Activated T-helper 1 cell treated with anti-CD3 and anti-CD28 coated beads, Interleukin-12 subunit alpha, Interleukin-12 subunit beta, Interleukin-2, Interleukin-4 antibody, amounts not matched to agents 30 ng/mL and 10 ng/mL and 1 ng/mL, durations not matched to agents 14 hours and 24 hours and 36 hours (primary cell): ENCODE measurements at regions of chr3 and their contacts with region 1.

Region 1: GRCh38 chr3:19885468-19885867 is 48.5 kb downstream of the EFHB start:
- DNase-seq: no peak
- H3K4me3 Mint-ChIP-seq: no peak overlapping the region
- H3K27ac Mint-ChIP-seq: no peak overlapping the region
- H3K4me1 Mint-ChIP-seq: peaks cover 11% of the 10 kb centered on the region
- H3K27me3 Mint-ChIP-seq: peaks cover 5% of the 10 kb centered on the region

Region 2: GRCh38 chr3:19946832-19947548 is 61.5 kb after region 1 on chr3 and contains the start of gene RAB5A:
- intact Hi-C with region 1: loop called (anchors 1 kb)
- DNase-seq: peak; percentile 96
- H3K4me3 Mint-ChIP-seq: peak within 1 kb of the TSS; percentile 92
- H3K27ac Mint-ChIP-seq: peak within 1 kb of the TSS; percentile 97
- H3K4me1 Mint-ChIP-seq: peaks cover 47% of the 10 kb centered on the region
- H3K27me3 Mint-ChIP-seq: no peaks in the 10 kb centered on the region
- total RNA-seq, gene RAB5A: 62.2 and 64.0 TPM in 2 replicates

Region 3: GRCh38 chr3:19972051-19972454 is 86.6 kb after region 1 on chr3:
- intact Hi-C with region 1: loop called (anchors 5 kb)
- DNase-seq: no peak
- H3K4me3 Mint-ChIP-seq: no peak overlapping the region
- H3K27ac Mint-ChIP-seq: no peak overlapping the region
- H3K4me1 Mint-ChIP-seq: peaks cover 34% of the 10 kb centered on the region
- H3K27me3 Mint-ChIP-seq: no peaks in the 10 kb centered on the region

Region 4: DNA sequence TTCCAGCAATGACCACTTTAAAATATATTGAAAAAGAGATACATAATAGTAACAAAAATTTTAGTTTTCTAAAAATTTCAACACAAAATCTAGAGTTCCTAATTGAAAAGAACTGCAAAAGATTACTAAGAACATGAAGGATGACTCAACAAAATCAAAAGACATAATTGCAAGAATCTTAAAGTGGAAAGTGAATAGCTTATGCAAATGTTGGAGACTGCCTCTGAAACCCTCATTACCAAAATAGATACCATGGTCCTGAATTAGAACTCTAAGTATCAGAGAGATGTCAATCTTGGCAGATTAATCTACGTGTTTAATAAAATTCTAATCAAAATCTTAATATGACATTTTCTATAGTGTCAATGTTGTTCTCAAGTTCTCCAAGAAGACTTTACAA is 361.2 kb after region 1 on chr3:
- intact Hi-C with region 1: no loop called
- DNase-seq: no peak
- H3K4me3 Mint-ChIP-seq: no peak overlapping the region
- H3K27ac Mint-ChIP-seq: no peak overlapping the region
- H3K4me1 Mint-ChIP-seq: no peaks in the 10 kb centered on the region
- H3K27me3 Mint-ChIP-seq: peaks cover 1% of the 10 kb centered on the region